ENCODE measurements at regions of chr7 and their contacts with region 1.

Region 1: DNA sequence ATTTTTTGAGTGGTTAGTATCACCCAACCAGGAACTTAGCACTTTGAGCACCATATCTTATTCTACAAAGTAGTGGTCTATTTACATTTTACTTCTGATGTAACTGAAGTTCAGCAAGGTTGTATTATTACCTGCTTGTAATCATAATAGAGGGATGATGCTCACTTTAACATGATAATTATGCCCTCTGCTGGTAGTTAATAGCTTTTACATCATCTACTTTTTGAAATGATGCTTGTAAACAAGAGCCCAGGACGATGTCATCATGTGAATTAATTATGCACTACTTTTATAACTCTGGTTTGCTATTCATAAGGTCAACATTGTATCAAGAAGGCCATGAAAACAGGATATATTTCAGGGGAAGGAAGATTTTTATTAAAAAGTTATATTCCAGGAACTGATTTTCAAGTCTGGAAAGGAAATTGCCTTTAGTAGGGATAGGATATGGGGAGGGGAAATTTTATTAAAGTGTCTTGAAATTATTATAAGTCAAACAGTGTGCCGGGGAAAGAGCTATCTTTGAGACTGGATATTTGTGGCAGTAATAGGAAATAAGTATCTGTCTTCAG is 80.3 kb upstream of the SCIN start:
- DNase-seq: no peak
- H3K4me3 Mint-ChIP-seq: no peak overlapping the region
- H3K27ac Mint-ChIP-seq: no peak overlapping the region
- H3K4me1 Mint-ChIP-seq: no peaks in the 10 kb centered on the region
- H3K27me3 Mint-ChIP-seq: no peaks in the 10 kb centered on the region

Region 2: DNA sequence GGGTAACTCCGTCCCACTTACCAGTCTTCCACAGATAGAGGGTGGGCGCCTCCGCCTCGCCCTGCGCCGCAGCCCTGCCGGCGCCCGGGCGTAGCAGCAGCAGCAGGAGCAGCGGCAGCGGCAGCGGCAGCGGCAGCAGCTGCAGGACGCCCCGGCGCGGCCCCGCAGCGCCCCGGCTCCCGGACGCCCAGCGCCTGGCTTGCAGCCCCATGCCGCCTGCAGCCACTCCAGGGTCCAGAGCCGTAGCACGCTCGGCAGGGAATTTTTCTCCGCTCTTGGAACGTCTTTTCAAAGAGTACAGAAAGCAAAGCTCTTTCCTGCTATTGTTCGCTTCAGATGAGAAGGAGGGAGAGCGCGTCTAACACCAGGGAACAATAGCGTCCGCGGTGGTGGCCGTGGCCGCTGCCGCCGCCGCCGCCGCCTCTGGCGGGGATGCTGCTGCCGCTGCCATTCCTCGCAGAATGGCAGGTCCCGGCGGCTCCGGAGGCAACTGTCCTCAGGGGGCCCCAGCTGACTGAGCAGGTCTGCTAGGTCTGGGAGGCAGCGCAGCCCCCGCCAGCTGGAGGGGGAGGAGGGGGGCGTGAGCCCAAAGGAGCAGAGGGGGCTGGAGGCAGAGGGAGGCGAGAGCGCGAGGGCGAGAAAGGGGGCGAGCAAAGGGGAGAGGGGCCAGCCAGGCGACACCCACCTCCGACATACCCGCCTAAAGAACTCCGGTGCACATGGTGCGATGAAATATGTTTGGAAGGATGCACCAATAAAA is 658.3 kb before region 1 on chr7 and contains the start of gene THSD7A:
- CTCF ChIA-PET with region 1: no interaction called
- intact Hi-C with region 1: loop called (anchors 2 kb)
- DNase-seq: no peak
- H3K4me3 Mint-ChIP-seq: peak within 1 kb of the TSS; percentile 32
- H3K27ac Mint-ChIP-seq: no peak within 1 kb of the TSS
- H3K4me1 Mint-ChIP-seq: peaks cover 12% of the 10 kb centered on the region
- H3K27me3 Mint-ChIP-seq: peaks cover 47% of the 10 kb centered on the region
- total RNA-seq, gene THSD7A: not detected

Region 3: GRCh38 chr7:12322284-12322902 is 167.8 kb before region 1 on chr7:
- CTCF ChIA-PET with region 1: no interaction called
- intact Hi-C with region 1: loop called (anchors 5 kb)
- DNase-seq: peak; percentile 31
- H3K4me3 Mint-ChIP-seq: no peak overlapping the region
- H3K27ac Mint-ChIP-seq: no peak overlapping the region
- H3K4me1 Mint-ChIP-seq: peaks cover 2% of the 10 kb centered on the region
- H3K27me3 Mint-ChIP-seq: no peaks in the 10 kb centered on the region

Region 4: GRCh38 chr7:12436896-12437535 is 53.2 kb before region 1 on chr7:
- CTCF ChIA-PET with region 1: interaction called, 13 read pairs
- intact Hi-C with region 1: loop called (anchors 1 kb)
- DNase-seq: no peak
- H3K4me3 Mint-ChIP-seq: no peak overlapping the region
- H3K27ac Mint-ChIP-seq: no peak overlapping the region
- H3K4me1 Mint-ChIP-seq: no peaks in the 10 kb centered on the region
- H3K27me3 Mint-ChIP-seq: peaks cover 12% of the 10 kb centered on the region

Region 5: GRCh38 chr7:12475362-12476063 is 14.7 kb before region 1 on chr7:
- CTCF ChIA-PET with region 1: interaction called, 10 read pairs
- intact Hi-C with region 1: no loop called
- DNase-seq: no peak
- H3K4me3 Mint-ChIP-seq: no peak overlapping the region
- H3K27ac Mint-ChIP-seq: no peak overlapping the region
- H3K4me1 Mint-ChIP-seq: no peaks in the 10 kb centered on the region
- H3K27me3 Mint-ChIP-seq: no peaks in the 10 kb centered on the region

Measured in activated naive CD4-positive, alpha-beta T cell treated with anti-CD3 and anti-CD28 coated beads for 36 hours (primary cell).